Natural killer cell (primary cell): ENCODE measurements at regions of chr20 and their contacts with region 1.

Region 1: GRCh38 chr20:330233-331149 is 5.1 kb downstream of the SOX12 start:
- DNase-seq: peak; percentile 33 to 81
- ATAC-seq: peak; percentile 60 to 71 (median 61)
- H3K4me3 ChIP-seq: no peak overlapping the region
- H3K4me3 Mint-ChIP-seq: no peak overlapping the region
- H3K27ac ChIP-seq: no peak overlapping the region
- H3K27ac Mint-ChIP-seq: no peak overlapping the region
- H3K4me1 ChIP-seq: peaks cover 24% of the 10 kb centered on the region
- H3K4me1 Mint-ChIP-seq: peaks cover 0 to 10% of the 10 kb centered on the region in 2 donors
- H3K27me3 ChIP-seq: no peaks in the 10 kb centered on the region
- H3K27me3 Mint-ChIP-seq: no peaks in the 10 kb centered on the region
- CTCF ChIP-seq: peak; percentile 84

Region 2: GRCh38 chr20:208942-209566 is 121.4 kb before region 1 on chr20:
- intact Hi-C with region 1: loop called (anchors 1 kb)
- DNase-seq: peak in 1 of 2 donors; percentile 69
- ATAC-seq: peak; percentile 54 to 74 (median 64)
- H3K4me3 ChIP-seq: no peak overlapping the region
- H3K4me3 Mint-ChIP-seq: no peak overlapping the region
- H3K27ac ChIP-seq: no peak overlapping the region
- H3K27ac Mint-ChIP-seq: no peak overlapping the region
- H3K4me1 ChIP-seq: no peaks in the 10 kb centered on the region
- H3K4me1 Mint-ChIP-seq: no peaks in the 10 kb centered on the region
- H3K27me3 ChIP-seq: peaks cover 4% of the 10 kb centered on the region
- H3K27me3 Mint-ChIP-seq: peaks cover 5 to 19% of the 10 kb centered on the region in 2 donors
- CTCF ChIP-seq: peak; percentile 36

Region 3: GRCh38 chr20:301886-302848 is 28.3 kb before region 1 on chr20:
- intact Hi-C with region 1: no loop called
- DNase-seq: no peak
- ATAC-seq: no peak
- H3K4me3 ChIP-seq: no peak overlapping the region
- H3K4me3 Mint-ChIP-seq: no peak overlapping the region
- H3K27ac ChIP-seq: no peak overlapping the region
- H3K27ac Mint-ChIP-seq: peak overlapping the region in 1 of 2 donors; percentile 6
- H3K4me1 ChIP-seq: peaks cover 24% of the 10 kb centered on the region
- H3K4me1 Mint-ChIP-seq: peaks cover 26 to 43% of the 10 kb centered on the region in 2 donors
- H3K27me3 ChIP-seq: no peaks in the 10 kb centered on the region
- H3K27me3 Mint-ChIP-seq: no peaks in the 10 kb centered on the region
- CTCF ChIP-seq: no peak